A549 (cell line): ENCODE measurements at regions of chr2 and their contacts with region 1.

Region 1: GRCh38 chr2:70656421-70657010 is 102.9 kb upstream of the TGFA start:
- DNase-seq: no peak
- ATAC-seq: no peak
- H3K4me3 ChIP-seq: no peak overlapping the region
- H3K27ac ChIP-seq: no peak overlapping the region
- H3K4me1 ChIP-seq: no peaks in the 10 kb centered on the region
- CTCF ChIP-seq: no peak
- EP300 ChIP-seq: no peak
- POLR2A ChIP-seq: no peak
- RAD21 ChIP-seq: no peak

Region 2: GRCh38 chr2:70641263-70641784 is 15.2 kb before region 1 on chr2:
- CTCF ChIA-PET with region 1: interaction called, 57 read pairs
- POLR2A ChIA-PET with region 1: no interaction called
- DNase-seq: no peak
- ATAC-seq: no peak
- H3K4me3 ChIP-seq: no peak overlapping the region
- H3K27ac ChIP-seq: no peak overlapping the region
- H3K4me1 ChIP-seq: no peaks in the 10 kb centered on the region
- CTCF ChIP-seq: no peak
- EP300 ChIP-seq: no peak
- POLR2A ChIP-seq: no peak
- RAD21 ChIP-seq: no peak

Region 3: GRCh38 chr2:70671092-70671675 is 14.7 kb after region 1 on chr2:
- CTCF ChIA-PET with region 1: interaction called, 10 read pairs
- POLR2A ChIA-PET with region 1: no interaction called
- DNase-seq: no peak
- ATAC-seq: peak in 1 of 2 experiments; percentile 52; a peak in 3 of 6 replicates
- H3K4me3 ChIP-seq: no peak overlapping the region
- H3K27ac ChIP-seq: no peak overlapping the region
- H3K4me1 ChIP-seq: 0 out of 3 replicates have a peak, but pooled peaks cover 5% of the 10 kb centered on the region
- CTCF ChIP-seq: no peak
- EP300 ChIP-seq: no peak
- POLR2A ChIP-seq: no peak
- RAD21 ChIP-seq: no peak